Activated naive CD4-positive, alpha-beta T cell treated with anti-CD3 and anti-CD28 coated beads for 36 hours (primary cell): ENCODE measurements at regions of chr14 and their contacts with region 1.

Region 1: GRCh38 chr14:90970167-90970600 is 90.3 kb downstream of the RPS6KA5 start:
- DNase-seq: no peak
- H3K4me3 Mint-ChIP-seq: peak overlapping the region; percentile 47
- H3K27ac Mint-ChIP-seq: peak overlapping the region; percentile 88
- H3K4me1 Mint-ChIP-seq: peaks cover 41% of the 10 kb centered on the region
- H3K27me3 Mint-ChIP-seq: no peaks in the 10 kb centered on the region

Region 2: DNA sequence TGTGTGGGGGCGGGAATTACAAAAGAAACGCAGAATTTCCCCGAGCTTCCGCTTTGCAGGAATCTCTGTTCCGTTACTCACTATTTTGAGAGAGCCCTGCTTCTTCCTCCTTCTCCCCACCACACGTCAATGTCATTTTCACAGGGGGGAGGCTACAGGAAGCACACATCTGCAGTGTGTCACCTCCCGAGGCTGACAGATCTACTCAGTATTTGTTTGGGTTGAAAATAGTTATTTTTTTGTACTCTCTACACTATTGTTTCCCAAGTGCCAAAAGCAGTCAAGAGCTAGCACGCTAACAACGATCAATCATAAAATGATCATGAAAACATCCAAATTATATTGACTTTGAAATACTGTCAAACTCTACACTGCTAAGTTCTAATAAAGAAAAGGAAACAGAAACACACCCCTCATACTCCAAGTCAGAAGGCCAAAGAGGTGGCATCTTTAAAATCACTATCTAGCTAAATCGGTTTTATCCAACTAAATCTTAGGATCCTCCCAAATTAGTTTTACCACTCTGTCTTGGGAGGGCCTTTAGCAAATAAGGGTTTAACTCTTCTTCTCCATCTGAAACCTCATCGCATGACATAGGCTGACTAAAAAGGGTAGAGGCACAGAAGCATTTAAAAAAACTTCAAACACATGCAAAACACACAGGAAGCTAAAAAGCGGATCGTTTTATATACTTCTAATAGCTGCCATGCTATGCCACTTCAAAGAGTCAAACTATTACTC is 1605.0 kb before region 1 on chr14:
- CTCF ChIA-PET with region 1: no interaction called
- intact Hi-C with region 1: loop called (anchors 10 kb)
- DNase-seq: peak; percentile 80
- H3K4me3 Mint-ChIP-seq: peak overlapping the region; percentile 73
- H3K27ac Mint-ChIP-seq: peak overlapping the region; percentile 97
- H3K4me1 Mint-ChIP-seq: peaks cover 66% of the 10 kb centered on the region
- H3K27me3 Mint-ChIP-seq: no peaks in the 10 kb centered on the region

Region 3: DNA sequence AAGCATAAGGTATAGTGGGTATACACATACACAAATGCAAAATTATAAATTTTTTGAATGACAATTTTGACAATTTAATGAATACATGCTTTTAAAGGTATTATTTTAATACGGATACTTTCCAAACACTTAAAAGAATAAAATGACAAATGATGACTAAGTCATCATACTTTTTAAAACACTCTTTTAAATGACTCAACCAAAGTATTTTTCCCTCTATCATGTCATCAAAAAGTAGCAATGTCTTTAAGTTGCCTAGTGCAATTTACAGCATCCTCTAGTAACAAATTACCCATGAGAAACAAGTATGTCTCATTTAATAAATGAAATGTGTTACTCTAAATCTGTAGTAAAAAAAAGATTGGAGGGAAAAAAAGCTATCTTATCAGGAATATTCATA is 17.0 kb after region 1 on chr14:
- CTCF ChIA-PET with region 1: interaction called, 5 read pairs
- intact Hi-C with region 1: loop called (anchors 1 kb)
- DNase-seq: no peak
- H3K4me3 Mint-ChIP-seq: no peak overlapping the region
- H3K27ac Mint-ChIP-seq: no peak overlapping the region
- H3K4me1 Mint-ChIP-seq: peaks cover 32% of the 10 kb centered on the region
- H3K27me3 Mint-ChIP-seq: no peaks in the 10 kb centered on the region

Region 4: DNA sequence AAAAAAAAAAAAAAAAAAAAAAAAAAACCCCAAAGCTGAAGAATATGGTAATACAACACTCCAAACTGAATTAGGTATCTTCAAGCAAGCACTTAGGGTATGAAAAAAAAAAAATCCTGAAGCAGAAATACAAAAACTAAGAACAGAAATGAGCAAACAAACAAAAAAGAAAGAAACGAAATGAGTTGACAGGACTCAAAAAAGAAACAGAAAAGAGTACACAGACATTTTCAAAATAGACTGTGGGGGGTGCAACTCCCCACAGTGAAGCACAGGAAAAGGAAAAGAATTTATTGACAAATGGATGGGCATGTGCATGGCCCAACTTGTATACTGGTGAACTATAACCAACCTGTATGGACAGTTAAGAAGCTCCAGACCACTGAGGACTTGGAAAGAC is 65.7 kb after region 1 on chr14:
- CTCF ChIA-PET with region 1: interaction called, 4 read pairs
- intact Hi-C with region 1: loop called (anchors 1 kb)
- DNase-seq: peak; percentile 34
- H3K4me3 Mint-ChIP-seq: no peak overlapping the region
- H3K27ac Mint-ChIP-seq: peak overlapping the region; percentile 68
- H3K4me1 Mint-ChIP-seq: peaks cover 66% of the 10 kb centered on the region
- H3K27me3 Mint-ChIP-seq: no peaks in the 10 kb centered on the region

Region 5: GRCh38 chr14:91138511-91139359 is 168.6 kb after region 1 on chr14:
- CTCF ChIA-PET with region 1: no interaction called
- intact Hi-C with region 1: loop called (anchors 1 kb)
- DNase-seq: peak; percentile 80
- H3K4me3 Mint-ChIP-seq: no peak overlapping the region
- H3K27ac Mint-ChIP-seq: peak overlapping the region; percentile 59
- H3K4me1 Mint-ChIP-seq: peaks cover 43% of the 10 kb centered on the region
- H3K27me3 Mint-ChIP-seq: no peaks in the 10 kb centered on the region

Region 6: DNA sequence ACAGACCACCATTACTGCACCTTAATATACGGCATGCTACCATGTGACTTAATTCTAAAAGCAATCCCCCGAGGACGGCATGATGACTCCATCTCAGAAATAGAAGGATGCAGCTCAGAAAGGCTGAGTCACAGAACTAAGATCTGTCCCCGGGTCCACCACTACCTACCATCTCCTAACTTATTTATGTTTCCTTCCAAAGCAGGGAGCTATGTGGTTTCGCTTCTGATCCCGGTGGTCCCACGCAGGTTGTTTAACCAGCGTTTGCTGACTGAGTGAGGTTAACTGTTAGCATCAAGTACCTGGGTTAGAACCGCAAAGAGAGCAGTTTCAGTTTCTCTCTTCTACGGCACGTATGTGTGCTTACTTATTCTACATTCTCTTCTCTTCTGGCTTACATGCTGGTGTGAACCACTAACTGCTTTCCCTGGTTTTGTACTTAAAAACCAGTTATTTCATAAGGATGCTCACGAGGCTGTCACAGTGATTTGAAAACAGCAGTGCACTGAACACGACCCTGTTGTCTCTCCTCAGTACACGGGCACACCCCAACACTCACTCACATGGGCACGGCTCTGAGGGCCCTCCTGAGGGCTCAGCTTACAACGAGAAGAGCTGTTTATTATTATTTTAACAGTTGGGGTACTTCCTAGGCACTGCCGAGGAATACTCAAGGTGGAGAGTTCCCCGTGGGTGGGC is 380.8 kb after region 1 on chr14:
- CTCF ChIA-PET with region 1: no interaction called
- intact Hi-C with region 1: loop called (anchors 1 kb)
- DNase-seq: peak; percentile 82
- H3K4me3 Mint-ChIP-seq: peak overlapping the region; percentile 69
- H3K27ac Mint-ChIP-seq: peak overlapping the region; percentile 95
- H3K4me1 Mint-ChIP-seq: peaks cover 93% of the 10 kb centered on the region
- H3K27me3 Mint-ChIP-seq: no peaks in the 10 kb centered on the region